Activated T-helper 1 cell treated with anti-CD3 and anti-CD28 coated beads, Interleukin-12 subunit alpha, Interleukin-12 subunit beta, Interleukin-2, Interleukin-4 antibody, amounts not matched to agents 30 ng/mL and 10 ng/mL and 1 ng/mL, durations not matched to agents 14 hours and 24 hours and 36 hours (primary cell): ENCODE measurements at regions of chr17 and their contacts with region 1.

Region 1: DNA sequence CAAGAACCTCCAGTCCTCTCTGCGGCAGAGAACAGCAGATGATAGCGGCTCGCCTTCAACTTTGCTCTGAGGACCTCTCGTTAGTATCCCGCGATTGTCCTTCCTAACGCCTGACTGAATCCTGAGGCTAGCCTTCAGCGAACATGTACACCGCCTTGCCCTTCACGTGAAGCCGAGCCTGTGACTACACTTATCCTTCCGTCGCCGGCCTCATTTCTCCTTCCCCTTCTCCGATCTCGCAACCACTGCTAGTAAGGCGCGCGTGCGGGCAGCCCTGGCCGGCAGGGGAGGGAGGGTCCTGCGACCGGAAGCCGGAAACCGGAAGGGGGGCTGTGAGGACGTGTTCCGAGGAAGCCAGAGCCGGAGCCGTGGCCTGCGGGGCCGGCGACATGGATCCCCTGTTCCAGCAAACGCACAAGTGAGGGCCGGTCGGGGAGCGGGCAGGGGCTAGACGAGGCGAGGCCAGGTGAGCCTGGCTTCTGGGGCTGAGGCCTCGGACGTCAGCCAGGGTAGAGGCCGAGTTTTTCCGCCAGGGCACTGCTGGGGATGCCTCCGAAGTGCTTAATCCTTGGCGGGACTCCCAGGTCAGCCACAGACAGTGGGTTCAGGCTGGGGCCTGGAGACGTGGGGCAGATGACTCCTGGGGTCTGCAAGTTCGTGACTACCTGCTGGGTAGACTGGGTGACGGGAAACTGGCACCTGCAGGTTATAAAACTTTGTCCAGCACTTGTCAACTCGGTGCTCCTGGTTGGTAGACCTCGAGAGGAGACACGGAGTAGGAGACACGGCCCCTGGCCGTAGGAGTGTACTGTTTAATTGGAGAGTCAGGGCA is at the start of gene GOSR2:
- DNase-seq: peak; percentile 86
- H3K4me3 Mint-ChIP-seq: peak within 1 kb of the TSS; percentile 87
- H3K27ac Mint-ChIP-seq: peak within 1 kb of the TSS; percentile 100
- H3K4me1 Mint-ChIP-seq: peaks cover 43% of the 10 kb centered on the region
- H3K27me3 Mint-ChIP-seq: peaks cover 4% of the 10 kb centered on the region
- total RNA-seq, gene GOSR2: 59.4 and 62.7 TPM in 2 replicates

Region 2: DNA sequence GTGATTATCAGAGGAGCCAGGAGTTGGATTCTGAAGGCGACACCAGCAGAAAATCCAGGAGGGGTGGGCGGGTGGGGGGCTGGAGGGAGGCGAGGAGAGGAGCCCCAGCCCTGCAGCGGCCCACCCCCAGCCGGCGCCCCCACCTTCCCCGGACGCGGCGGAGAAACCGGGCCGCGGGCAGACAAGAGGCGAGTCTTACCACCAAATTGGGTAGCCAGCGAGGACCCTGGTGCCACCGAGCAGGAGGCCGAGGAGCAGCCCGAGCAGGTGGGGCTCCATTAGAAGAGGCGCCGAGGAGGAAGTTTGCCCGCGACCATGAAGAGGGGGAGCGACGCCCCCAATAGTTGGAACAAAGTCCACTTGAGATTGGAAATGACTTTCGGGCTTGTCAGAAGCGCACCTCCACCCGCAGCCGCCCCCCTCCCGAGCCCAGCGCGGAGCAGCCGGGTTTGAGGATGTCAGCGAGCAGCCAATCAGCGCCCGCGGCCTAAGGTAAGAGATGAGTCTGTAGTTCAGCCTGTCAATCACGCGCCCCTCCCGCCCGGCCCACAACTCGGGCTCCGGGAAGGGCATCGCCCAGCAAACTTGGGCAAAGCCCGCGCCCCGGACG is 104.6 kb before region 1 on chr17 and contains the start of gene WNT3:
- intact Hi-C with region 1: loop called (anchors 5 kb)
- DNase-seq: peak; percentile 29
- H3K4me3 Mint-ChIP-seq: peak within 1 kb of the TSS; percentile 68
- H3K27ac Mint-ChIP-seq: no peak within 1 kb of the TSS
- H3K4me1 Mint-ChIP-seq: no peaks in the 10 kb centered on the region
- H3K27me3 Mint-ChIP-seq: peaks cover 72% of the 10 kb centered on the region
- total RNA-seq, gene WNT3: 0.05 TPM in 1 of 2 replicates, not detected in the other

Region 3: GRCh38 chr17:46940621-46941404 is 17.8 kb after region 1 on chr17:
- intact Hi-C with region 1: loop called (anchors 2 kb)
- DNase-seq: peak; percentile 51
- H3K4me3 Mint-ChIP-seq: no peak overlapping the region
- H3K27ac Mint-ChIP-seq: peak overlapping the region; percentile 44
- H3K4me1 Mint-ChIP-seq: peaks cover 14% of the 10 kb centered on the region
- H3K27me3 Mint-ChIP-seq: peaks cover 1% of the 10 kb centered on the region

Region 4: GRCh38 chr17:46979147-46979863 is 56.3 kb after region 1 on chr17 and contains the start of gene RPRML:
- intact Hi-C with region 1: loop called (anchors 2 kb)
- DNase-seq: peak; percentile 5
- H3K4me3 Mint-ChIP-seq: peak within 1 kb of the TSS; percentile 83
- H3K27ac Mint-ChIP-seq: no peak within 1 kb of the TSS
- H3K4me1 Mint-ChIP-seq: peaks cover 6% of the 10 kb centered on the region
- H3K27me3 Mint-ChIP-seq: peaks cover 46% of the 10 kb centered on the region
- total RNA-seq, gene RPRML: not detected in 2 replicates

Region 5: GRCh38 chr17:47066841-47067682 is 144.0 kb after region 1 on chr17:
- intact Hi-C with region 1: loop called (anchors 5 kb)
- DNase-seq: peak; percentile 63
- H3K4me3 Mint-ChIP-seq: peak overlapping the region; percentile 94
- H3K27ac Mint-ChIP-seq: peak overlapping the region; percentile 93
- H3K4me1 Mint-ChIP-seq: peaks cover 34% of the 10 kb centered on the region
- H3K27me3 Mint-ChIP-seq: no peaks in the 10 kb centered on the region

Region 6: GRCh38 chr17:47188876-47189731 is 266.1 kb after region 1 on chr17 and contains the start of gene CDC27:
- intact Hi-C with region 1: loop called (anchors 10 kb)
- DNase-seq: peak; percentile 100
- H3K4me3 Mint-ChIP-seq: peak within 1 kb of the TSS; percentile 98
- H3K27ac Mint-ChIP-seq: peak within 1 kb of the TSS; percentile 97
- H3K4me1 Mint-ChIP-seq: peaks cover 46% of the 10 kb centered on the region
- H3K27me3 Mint-ChIP-seq: peaks cover 2% of the 10 kb centered on the region
- total RNA-seq, gene CDC27: 89.7 and 92.0 TPM in 2 replicates